Posterior cingulate gyrus (tissue), 11 donors: ENCODE measurements at regions of chr9 and their contacts with region 1.

Region 1: GRCh38 chr9:91758491-91758981 is 191.5 kb downstream of the ROR2 start:
- DNase-seq: peak in 1 of 10 donors; percentile 15

Region 2: GRCh38 chr9:91817493-91818224 is 59.1 kb after region 1 on chr9:
- intact Hi-C with region 1: loop called (anchors 10 kb)
- DNase-seq: peak in 1 of 10 donors; percentile 77